Pancreas (tissue), 10 donors: ENCODE measurements at regions of chr2 and their contacts with region 1.

Region 1: GRCh38 chr2:42095923-42096408 is 48.1 kb downstream of the PKDCC start:
- DNase-seq: peak; percentile 54 to 86 (median 72)
- ATAC-seq: peak; percentile 58 to 73 (median 70)
- H3K4me3 ChIP-seq: no peak overlapping the region
- H3K27ac ChIP-seq: no peak overlapping the region
- H3K4me1 ChIP-seq: peaks cover 0 to 8% (median 7%) of the 10 kb centered on the region in 3 donors
- H3K27me3 ChIP-seq: no peaks in the 10 kb centered on the region
- CTCF ChIP-seq: peak; percentile 39 to 71 (median 52)

Region 2: DNA sequence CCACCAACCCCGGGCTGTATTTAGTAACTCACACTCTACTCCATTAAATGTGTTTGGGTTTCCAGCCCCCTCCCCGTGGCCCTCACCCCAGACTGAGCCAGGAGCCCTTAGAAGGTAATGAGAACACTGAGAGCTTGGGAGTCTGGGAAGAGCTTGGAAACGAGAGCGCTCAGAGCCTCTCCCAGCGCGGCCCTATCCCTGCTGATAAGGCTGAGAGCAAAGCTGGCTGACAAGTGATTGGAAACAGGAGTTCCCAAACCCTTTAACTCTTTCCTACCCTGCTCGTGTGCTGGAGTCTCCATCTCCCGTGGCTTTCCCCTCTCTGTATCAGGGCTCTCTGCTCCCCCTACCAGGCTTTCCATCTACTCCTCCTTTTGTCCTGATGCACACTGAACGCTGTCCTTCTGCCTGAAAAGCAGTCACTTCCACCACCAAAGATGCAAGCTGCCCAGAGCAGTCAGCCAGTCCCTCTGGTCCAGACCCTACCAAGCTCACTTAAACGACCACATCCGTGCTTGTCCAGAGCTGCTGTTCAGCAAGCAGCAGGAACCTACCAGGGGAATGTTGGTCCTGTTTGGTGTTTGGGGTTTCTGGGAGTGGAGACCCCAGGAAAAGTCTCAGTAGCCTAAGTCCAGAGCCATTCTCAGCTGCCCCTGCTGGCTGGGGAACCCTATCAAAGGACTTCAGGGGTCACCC is 148.1 kb before region 1 on chr2:
- intact Hi-C with region 1: no loop called
- DNase-seq: no peak
- ATAC-seq: peak in 2 of 4 donors; percentile 35 to 49
- H3K4me3 ChIP-seq: no peak overlapping the region
- H3K27ac ChIP-seq: no peak overlapping the region
- H3K4me1 ChIP-seq: no peaks in the 10 kb centered on the region
- H3K27me3 ChIP-seq: no peaks in the 10 kb centered on the region
- CTCF ChIP-seq: no peak

Region 3: DNA sequence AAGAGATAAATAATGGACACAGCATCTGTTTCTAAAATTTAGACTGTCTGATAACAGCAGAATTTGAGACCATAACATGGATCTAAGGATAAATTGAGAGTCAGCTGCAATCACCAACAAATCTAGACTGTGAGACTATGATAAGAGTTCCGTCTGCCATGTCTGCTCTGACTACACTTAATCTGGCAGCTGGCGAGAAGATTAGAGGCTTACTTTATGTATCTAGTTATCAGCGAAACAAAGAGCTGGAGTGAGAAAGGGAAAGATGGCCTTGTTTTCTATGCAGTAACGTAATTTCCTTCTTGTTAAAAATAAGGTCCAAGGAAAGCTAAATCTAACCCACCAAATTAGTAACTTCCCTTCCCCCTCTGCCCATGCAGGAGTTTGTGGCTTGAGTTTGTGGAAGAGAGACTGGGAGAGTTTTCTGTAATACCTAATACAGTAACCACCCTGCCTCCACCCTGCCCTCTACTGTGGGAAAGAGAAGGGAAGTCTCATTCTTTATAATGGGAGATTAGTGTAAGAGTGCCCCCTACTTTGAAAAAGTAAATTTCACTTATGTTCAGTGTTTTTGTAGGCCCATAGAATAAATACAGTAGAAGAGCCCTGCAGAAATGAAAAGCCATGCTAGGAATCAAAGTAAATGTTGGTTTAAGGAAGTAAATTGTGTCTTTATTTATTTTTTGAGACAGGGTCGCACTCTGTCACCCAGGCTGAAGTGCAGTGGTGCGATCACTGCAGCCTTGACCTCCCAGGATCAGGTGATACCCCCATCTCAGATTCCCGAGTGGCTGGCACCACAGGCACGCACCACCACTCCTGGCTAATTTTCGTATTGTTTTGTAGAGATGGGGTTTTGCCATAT is 100.7 kb after region 1 on chr2:
- intact Hi-C with region 1: loop called in 2 of 3 experiments (anchors 10 kb)
- DNase-seq: peak in 4 of 6 donors; percentile 34 to 75 (median 59)
- ATAC-seq: peak; percentile 75 to 91 (median 90)
- H3K4me3 ChIP-seq: peak overlapping the region in 1 of 4 donors; percentile 11
- H3K27ac ChIP-seq: peak overlapping the region; percentile 17 to 80 (median 61)
- H3K4me1 ChIP-seq: peaks cover 39 to 70% (median 46%) of the 10 kb centered on the region in 3 donors
- H3K27me3 ChIP-seq: no peaks in the 10 kb centered on the region
- CTCF ChIP-seq: peak in 3 of 4 donors; percentile 30 to 38 (median 38)

Region 4: GRCh38 chr2:42216712-42217111 is 120.7 kb after region 1 on chr2:
- intact Hi-C with region 1: no loop called
- DNase-seq: no peak
- ATAC-seq: peak; percentile 49 to 79 (median 53)
- H3K4me3 ChIP-seq: no peak overlapping the region
- H3K27ac ChIP-seq: peak overlapping the region in 2 of 4 donors; percentile 27 to 64
- H3K4me1 ChIP-seq: peaks cover 6 to 35% (median 10%) of the 10 kb centered on the region in 3 donors
- H3K27me3 ChIP-seq: no peaks in the 10 kb centered on the region
- CTCF ChIP-seq: no peak

Region 5: GRCh38 chr2:42233976-42234441 is 138.0 kb after region 1 on chr2:
- intact Hi-C with region 1: loop called in 1 of 3 experiments (anchors 5 kb)
- DNase-seq: no peak
- ATAC-seq: no peak
- H3K4me3 ChIP-seq: no peak overlapping the region
- H3K27ac ChIP-seq: no peak overlapping the region
- H3K4me1 ChIP-seq: peaks cover 0 to 19% (median 11%) of the 10 kb centered on the region in 3 donors
- H3K27me3 ChIP-seq: no peaks in the 10 kb centered on the region
- CTCF ChIP-seq: no peak

Region 6: GRCh38 chr2:42328148-42328833 is 232.3 kb after region 1 on chr2:
- intact Hi-C with region 1: loop called in 2 of 3 experiments (anchors 10 kb)
- DNase-seq: no peak
- ATAC-seq: peak; percentile 32 to 71 (median 52)
- H3K4me3 ChIP-seq: no peak overlapping the region
- H3K27ac ChIP-seq: no peak overlapping the region
- H3K4me1 ChIP-seq: peaks cover 0 to 11% (median 6%) of the 10 kb centered on the region in 3 donors
- H3K27me3 ChIP-seq: no peaks in the 10 kb centered on the region
- CTCF ChIP-seq: peak in 2 of 4 donors; percentile 26 to 35

Region 7: GRCh38 chr2:42446503-42447271 is 350.7 kb after region 1 on chr2:
- intact Hi-C with region 1: no loop called
- DNase-seq: no peak
- ATAC-seq: peak in 3 of 4 donors; percentile 48 to 83 (median 59)
- H3K4me3 ChIP-seq: no peak overlapping the region
- H3K27ac ChIP-seq: peak overlapping the region in 3 of 4 donors; percentile 30 to 54 (median 50)
- H3K4me1 ChIP-seq: no peaks in the 10 kb centered on the region
- H3K27me3 ChIP-seq: no peaks in the 10 kb centered on the region
- CTCF ChIP-seq: no peak

Region 8: GRCh38 chr2:43444989-43445645 is 1349.2 kb after region 1 on chr2:
- intact Hi-C with region 1: no loop called
- DNase-seq: no peak
- ATAC-seq: no peak
- H3K4me3 ChIP-seq: no peak overlapping the region
- H3K27ac ChIP-seq: no peak overlapping the region
- H3K4me1 ChIP-seq: peaks cover 4 to 16% (median 11%) of the 10 kb centered on the region in 3 donors
- H3K27me3 ChIP-seq: no peaks in the 10 kb centered on the region
- CTCF ChIP-seq: no peak